ENCODE measurements at regions of chr1 and their contacts with region 1.

Region 1: DNA sequence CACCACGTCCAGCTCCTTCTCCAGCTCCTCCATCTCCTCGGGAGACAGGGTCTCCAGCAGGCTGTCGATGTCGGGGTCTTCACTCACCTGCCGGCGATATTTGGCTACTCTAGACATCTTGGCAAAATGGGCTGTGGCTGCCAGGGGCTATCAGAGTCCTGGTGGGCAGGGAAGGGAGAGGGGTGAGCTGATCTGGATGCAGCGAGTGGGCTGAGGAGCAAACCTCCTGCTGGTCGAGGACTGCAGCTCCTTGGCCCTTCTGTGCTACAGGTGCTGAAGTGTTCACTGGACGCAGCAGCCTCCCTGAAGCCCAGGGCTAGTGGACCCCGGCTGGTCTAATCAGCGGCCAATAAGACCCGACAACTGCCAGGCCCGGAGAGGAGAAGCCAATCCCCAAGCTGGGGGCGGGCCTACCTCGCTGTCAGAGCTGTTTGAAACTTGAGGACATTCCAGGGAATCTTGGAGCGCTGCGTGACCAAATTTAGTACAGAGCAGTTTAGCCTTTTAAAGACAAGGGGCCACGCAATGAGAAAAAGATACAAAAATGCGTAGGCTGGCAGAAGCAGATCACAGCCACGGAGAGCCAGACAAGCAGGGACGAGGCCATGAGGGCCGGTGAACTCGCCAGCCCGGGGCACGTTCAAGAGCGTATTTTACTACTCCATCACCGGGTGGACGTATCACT is at the start of gene LMOD1:
- DNase-seq: peak in 1 of 35 experiments; percentile 11
- ATAC-seq: peak in 3 of 4 experiments; percentile 42 to 53 (median 47)
- H3K4me3 ChIP-seq: peak within 1 kb of the TSS in 1 of 2 donors; percentile 7
- H3K4me3 Mint-ChIP-seq: peak within 1 kb of the TSS; percentile 4 to 70 (median 53)
- H3K27ac ChIP-seq: no peak within 1 kb of the TSS
- H3K27ac Mint-ChIP-seq: peak within 1 kb of the TSS in 1 of 2 donors; percentile 55
- H3K4me1 ChIP-seq: peaks cover 0 to 10% of the 10 kb centered on the region in 2 experiments
- H3K4me1 Mint-ChIP-seq: peaks cover 12 to 17% (median 13%) of the 10 kb centered on the region in 3 donors
- H3K27me3 ChIP-seq: peaks cover 13 to 50% of the 10 kb centered on the region in 2 experiments
- H3K27me3 Mint-ChIP-seq: peaks cover 52 to 54% of the 10 kb centered on the region in 2 donors
- total RNA-seq, gene LMOD1: 0.10 to 0.29 (median 0.16) TPM in 3 of 5 donors, not detected in the others

Region 2: GRCh38 chr1:201850053-201850397 is 96.3 kb before region 1 on chr1:
- CTCF ChIA-PET with region 1: no interaction called
- POLR2A ChIA-PET with region 1: no interaction called
- DNase-seq: no peak
- ATAC-seq: no peak
- H3K4me3 ChIP-seq: no peak overlapping the region
- H3K4me3 Mint-ChIP-seq: no peak overlapping the region
- H3K27ac ChIP-seq: no peak overlapping the region
- H3K27ac Mint-ChIP-seq: no peak overlapping the region
- H3K4me1 ChIP-seq: no peaks in the 10 kb centered on the region
- H3K4me1 Mint-ChIP-seq: peaks cover 5 to 8% (median 6%) of the 10 kb centered on the region in 3 donors
- H3K27me3 ChIP-seq: no peaks in the 10 kb centered on the region
- H3K27me3 Mint-ChIP-seq: no peaks in the 10 kb centered on the region

Region 3: DNA sequence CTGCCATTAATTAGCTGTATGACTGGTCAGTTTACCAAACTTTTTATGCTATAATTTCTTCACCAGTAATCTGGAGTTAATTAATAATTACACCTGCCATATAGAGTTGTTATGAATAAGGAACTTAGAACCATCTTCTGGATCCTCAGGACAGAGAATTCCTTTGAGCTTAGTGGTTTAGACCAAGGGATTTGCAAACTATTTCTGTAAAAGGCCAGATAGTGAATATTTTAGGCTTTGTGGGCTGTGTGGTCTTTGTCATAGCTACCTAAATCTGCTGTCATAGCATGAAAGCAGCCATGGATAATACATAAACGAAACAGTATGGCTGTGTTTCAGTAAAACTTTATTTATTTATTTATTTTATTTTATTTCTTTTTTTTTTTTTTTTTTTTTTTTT is 17.9 kb after region 1 on chr1:
- CTCF ChIA-PET with region 1: interaction called in 1 of 2 experiments, 5 read pairs
- POLR2A ChIA-PET with region 1: interaction called in 1 of 2 experiments, 11 read pairs
- DNase-seq: no peak
- ATAC-seq: no peak
- H3K4me3 ChIP-seq: no peak overlapping the region
- H3K4me3 Mint-ChIP-seq: no peak overlapping the region
- H3K27ac ChIP-seq: no peak overlapping the region
- H3K27ac Mint-ChIP-seq: no peak overlapping the region
- H3K4me1 ChIP-seq: no peaks in the 10 kb centered on the region
- H3K4me1 Mint-ChIP-seq: peaks cover 0 to 4% (median 0%) of the 10 kb centered on the region in 3 donors
- H3K27me3 ChIP-seq: no peaks in the 10 kb centered on the region
- H3K27me3 Mint-ChIP-seq: no peaks in the 10 kb centered on the region

Region 4: DNA sequence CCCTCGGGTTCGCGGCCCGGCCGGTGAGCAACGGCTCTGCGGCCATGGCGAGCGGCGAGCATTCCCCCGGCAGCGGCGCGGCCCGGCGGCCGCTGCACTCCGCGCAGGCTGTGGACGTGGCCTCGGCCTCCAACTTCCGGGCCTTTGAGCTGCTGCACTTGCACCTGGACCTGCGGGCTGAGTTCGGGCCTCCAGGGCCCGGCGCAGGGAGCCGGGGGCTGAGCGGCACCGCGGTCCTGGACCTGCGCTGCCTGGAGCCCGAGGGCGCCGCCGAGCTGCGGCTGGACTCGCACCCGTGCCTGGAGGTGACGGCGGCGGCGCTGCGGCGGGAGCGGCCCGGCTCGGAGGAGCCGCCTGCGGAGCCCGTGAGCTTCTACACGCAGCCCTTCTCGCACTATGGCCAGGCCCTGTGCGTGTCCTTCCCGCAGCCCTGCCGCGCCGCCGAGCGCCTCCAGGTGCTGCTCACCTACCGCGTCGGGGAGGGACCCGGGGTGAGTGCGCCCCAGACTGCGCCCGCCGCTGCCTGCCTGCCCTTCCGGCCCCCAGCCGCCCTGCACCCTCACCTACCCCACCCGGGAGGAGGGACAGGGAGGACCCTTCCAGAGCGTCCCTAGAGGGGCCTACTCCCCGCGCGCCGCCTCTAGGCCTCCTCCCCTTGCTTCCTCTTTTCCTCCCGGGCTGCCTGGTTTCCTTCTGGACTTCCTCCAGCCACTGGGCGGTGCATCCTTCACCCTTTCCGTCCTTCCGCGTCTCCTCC is 36.4 kb after region 1 on chr1 and contains the start of gene RNPEP:
- CTCF ChIA-PET with region 1: interaction called in 1 of 2 experiments, 11 read pairs
- POLR2A ChIA-PET with region 1: no interaction called
- DNase-seq: peak; percentile 18 to 68 (median 45)
- ATAC-seq: peak; percentile 83 to 87 (median 84)
- H3K4me3 ChIP-seq: peak within 1 kb of the TSS; percentile 66 to 90
- H3K4me3 Mint-ChIP-seq: peak within 1 kb of the TSS; percentile 92 to 99 (median 97)
- H3K27ac ChIP-seq: peak within 1 kb of the TSS; percentile 35
- H3K27ac Mint-ChIP-seq: peak within 1 kb of the TSS; percentile 91 to 94
- H3K4me1 ChIP-seq: peaks cover 0 to 11% of the 10 kb centered on the region in 2 experiments
- H3K4me1 Mint-ChIP-seq: peaks cover 24 to 33% (median 26%) of the 10 kb centered on the region in 3 donors
- H3K27me3 ChIP-seq: no peaks in the 10 kb centered on the region
- H3K27me3 Mint-ChIP-seq: no peaks in the 10 kb centered on the region
- total RNA-seq, gene RNPEP: 20.1 to 30.4 (median 23.9) TPM

Region 5: GRCh38 chr1:202101184-202102005 is 155.0 kb after region 1 on chr1:
- CTCF ChIA-PET with region 1: no interaction called
- POLR2A ChIA-PET with region 1: no interaction called
- DNase-seq: no peak
- ATAC-seq: no peak
- H3K4me3 ChIP-seq: no peak overlapping the region
- H3K4me3 Mint-ChIP-seq: no peak overlapping the region
- H3K27ac ChIP-seq: no peak overlapping the region
- H3K27ac Mint-ChIP-seq: no peak overlapping the region
- H3K4me1 ChIP-seq: no peaks in the 10 kb centered on the region
- H3K4me1 Mint-ChIP-seq: no peaks in the 10 kb centered on the region
- H3K27me3 ChIP-seq: peaks cover 0 to 2% of the 10 kb centered on the region in 2 experiments
- H3K27me3 Mint-ChIP-seq: peaks cover 0 to 2% of the 10 kb centered on the region in 2 donors